Activated CD8-positive, alpha-beta T cell treated with anti-CD3 and anti-CD28 coated beads, Interleukin-2, amount 10 ng/mL, durations not matched to agents 7 days and 5 days (primary cell): ENCODE measurements at regions of chr7 and their contacts with region 1.

Region 1: DNA sequence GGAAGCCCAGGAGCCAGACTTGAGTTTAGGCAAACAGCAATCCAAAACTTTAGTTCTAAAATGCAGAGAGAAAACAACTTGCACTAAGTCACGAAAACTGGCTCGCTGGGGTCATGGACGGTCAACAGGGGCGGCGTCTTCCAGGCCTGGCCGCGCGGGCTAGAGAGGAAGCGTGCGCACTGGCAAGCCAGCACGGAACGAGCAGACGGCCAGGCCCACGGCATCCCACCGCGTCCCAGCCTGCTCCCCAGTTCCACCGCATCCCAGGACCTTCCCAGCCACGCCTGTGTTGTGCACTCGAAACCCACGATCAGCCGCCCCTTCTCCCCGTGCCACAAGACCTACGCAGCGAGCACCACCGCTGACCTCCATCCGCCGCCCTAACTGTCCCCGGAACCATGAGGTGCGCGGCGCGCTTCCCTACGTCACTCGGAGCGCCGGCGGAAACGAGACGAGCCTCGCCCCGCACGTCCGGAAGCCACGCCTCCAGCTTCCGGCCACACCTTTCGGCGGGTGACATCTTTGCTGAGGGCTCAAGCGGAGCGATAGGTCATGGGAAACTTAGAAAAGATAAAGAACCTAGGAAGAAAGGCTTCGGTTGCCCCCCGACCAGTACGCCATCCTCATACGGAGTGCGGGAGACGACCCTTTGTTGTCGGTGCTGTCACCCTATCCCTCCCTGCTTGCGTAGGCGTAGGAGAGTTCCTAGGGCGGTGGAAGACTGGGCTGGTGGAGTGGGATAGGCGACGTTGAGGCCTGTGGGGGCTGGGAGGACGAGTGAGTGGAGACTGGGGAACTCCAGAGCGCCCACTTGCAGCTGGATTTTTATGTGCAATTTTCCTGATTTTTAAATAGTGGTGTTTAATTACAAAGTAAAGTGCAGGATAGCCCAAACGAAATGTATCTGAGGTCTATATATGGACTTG is at the start of gene TBRG4:
- DNase-seq: peak; percentile 97
- ATAC-seq: peak; percentile 90
- H3K4me3 Mint-ChIP-seq: peak within 1 kb of the TSS; percentile 90
- H3K27ac Mint-ChIP-seq: peak within 1 kb of the TSS; percentile 97
- H3K4me1 Mint-ChIP-seq: peaks cover 41% of the 10 kb centered on the region
- H3K27me3 Mint-ChIP-seq: peaks cover 16% of the 10 kb centered on the region
- total RNA-seq, gene TBRG4: 133 to 137 TPM

Region 2: GRCh38 chr7:44944821-44945220 is 166.7 kb before region 1 on chr7:
- CTCF ChIA-PET with region 1: no interaction called
- POLR2A ChIA-PET with region 1: no interaction called
- DNase-seq: no peak
- ATAC-seq: no peak
- H3K4me3 Mint-ChIP-seq: no peak overlapping the region
- H3K27ac Mint-ChIP-seq: no peak overlapping the region
- H3K4me1 Mint-ChIP-seq: no peaks in the 10 kb centered on the region
- H3K27me3 Mint-ChIP-seq: peaks cover 25% of the 10 kb centered on the region

Region 3: GRCh38 chr7:44980393-44981034 is 131.0 kb before region 1 on chr7:
- CTCF ChIA-PET with region 1: no interaction called
- POLR2A ChIA-PET with region 1: interaction called, 11 read pairs
- DNase-seq: peak; percentile 76
- ATAC-seq: peak; percentile 11
- H3K4me3 Mint-ChIP-seq: peak overlapping the region; percentile 95
- H3K27ac Mint-ChIP-seq: peak overlapping the region; percentile 98
- H3K4me1 Mint-ChIP-seq: peaks cover 75% of the 10 kb centered on the region
- H3K27me3 Mint-ChIP-seq: no peaks in the 10 kb centered on the region

Region 4: GRCh38 chr7:45026984-45027773 is 84.4 kb before region 1 on chr7:
- CTCF ChIA-PET with region 1: interaction called, 3 read pairs
- POLR2A ChIA-PET with region 1: interaction called, 19 read pairs
- DNase-seq: peak; percentile 56
- ATAC-seq: peak; percentile 57
- H3K4me3 Mint-ChIP-seq: peak overlapping the region; percentile 80
- H3K27ac Mint-ChIP-seq: peak overlapping the region; percentile 84
- H3K4me1 Mint-ChIP-seq: peaks cover 67% of the 10 kb centered on the region
- H3K27me3 Mint-ChIP-seq: no peaks in the 10 kb centered on the region

Region 5: GRCh38 chr7:45033261-45033930 is 78.2 kb before region 1 on chr7:
- CTCF ChIA-PET with region 1: interaction called, 3 read pairs
- POLR2A ChIA-PET with region 1: interaction called, 19 read pairs
- DNase-seq: peak; percentile 57
- ATAC-seq: peak; percentile 37
- H3K4me3 Mint-ChIP-seq: peak overlapping the region; percentile 63
- H3K27ac Mint-ChIP-seq: peak overlapping the region; percentile 71
- H3K4me1 Mint-ChIP-seq: peaks cover 84% of the 10 kb centered on the region
- H3K27me3 Mint-ChIP-seq: no peaks in the 10 kb centered on the region

Region 6: DNA sequence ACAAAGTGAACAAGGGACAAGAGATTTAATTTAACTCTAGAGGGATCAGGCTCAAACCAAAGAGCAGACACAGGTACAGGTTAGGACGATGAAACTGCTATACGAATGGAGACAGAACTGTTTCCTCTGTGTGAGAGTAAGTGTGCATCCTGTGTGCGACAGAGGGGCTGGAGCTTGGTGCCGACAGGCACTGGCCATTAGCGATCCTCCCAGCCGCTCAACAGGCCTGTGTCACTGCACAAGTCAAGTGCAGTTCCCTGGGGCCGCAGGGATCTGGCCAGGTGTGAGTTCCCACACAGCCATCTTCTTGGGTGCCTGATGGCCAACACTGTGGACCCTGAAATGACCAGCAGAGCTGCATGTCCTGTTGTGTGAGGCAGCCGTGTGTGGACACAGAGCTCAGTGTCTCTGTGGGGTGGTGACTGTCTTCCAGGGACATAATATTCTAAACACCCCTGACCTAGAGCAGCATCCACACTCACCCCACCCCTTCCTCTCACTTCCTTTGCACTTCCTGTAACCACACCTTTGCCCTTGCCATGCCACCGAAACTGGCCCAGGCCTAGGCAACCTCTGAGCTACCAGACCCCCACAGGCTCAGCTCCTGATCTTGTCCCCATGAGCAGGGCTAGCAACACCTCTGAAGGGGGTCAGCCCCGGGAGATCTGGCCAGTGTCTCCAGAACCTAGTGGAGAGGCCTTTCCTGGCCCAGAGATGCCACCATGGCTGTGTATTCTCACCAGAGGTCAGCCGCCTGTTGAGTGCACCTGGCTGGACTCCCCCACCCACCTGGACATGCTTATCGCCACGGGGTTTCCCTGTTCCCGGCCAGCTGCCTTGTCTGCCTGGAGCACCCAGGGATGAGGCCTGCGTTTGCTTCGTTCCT is 11.7 kb after region 1 on chr7:
- CTCF ChIA-PET with region 1: interaction called, 4 read pairs
- POLR2A ChIA-PET with region 1: interaction called, 11 read pairs
- DNase-seq: peak; percentile 37
- ATAC-seq: peak; percentile 59
- H3K4me3 Mint-ChIP-seq: peak overlapping the region; percentile 54
- H3K27ac Mint-ChIP-seq: peak overlapping the region; percentile 97
- H3K4me1 Mint-ChIP-seq: peaks cover 22% of the 10 kb centered on the region
- H3K27me3 Mint-ChIP-seq: no peaks in the 10 kb centered on the region